ENCODE measurements at regions of chr2 and their contacts with region 1.

Region 1: GRCh38 chr2:37585982-37586621 is 85.3 kb downstream of the CDC42EP3 start:
- DNase-seq: peak; percentile 79
- H3K4me3 Mint-ChIP-seq: peak overlapping the region; percentile 15
- H3K27ac Mint-ChIP-seq: peak overlapping the region; percentile 99
- H3K4me1 Mint-ChIP-seq: peaks cover 90% of the 10 kb centered on the region
- H3K27me3 Mint-ChIP-seq: no peaks in the 10 kb centered on the region

Region 2: DNA sequence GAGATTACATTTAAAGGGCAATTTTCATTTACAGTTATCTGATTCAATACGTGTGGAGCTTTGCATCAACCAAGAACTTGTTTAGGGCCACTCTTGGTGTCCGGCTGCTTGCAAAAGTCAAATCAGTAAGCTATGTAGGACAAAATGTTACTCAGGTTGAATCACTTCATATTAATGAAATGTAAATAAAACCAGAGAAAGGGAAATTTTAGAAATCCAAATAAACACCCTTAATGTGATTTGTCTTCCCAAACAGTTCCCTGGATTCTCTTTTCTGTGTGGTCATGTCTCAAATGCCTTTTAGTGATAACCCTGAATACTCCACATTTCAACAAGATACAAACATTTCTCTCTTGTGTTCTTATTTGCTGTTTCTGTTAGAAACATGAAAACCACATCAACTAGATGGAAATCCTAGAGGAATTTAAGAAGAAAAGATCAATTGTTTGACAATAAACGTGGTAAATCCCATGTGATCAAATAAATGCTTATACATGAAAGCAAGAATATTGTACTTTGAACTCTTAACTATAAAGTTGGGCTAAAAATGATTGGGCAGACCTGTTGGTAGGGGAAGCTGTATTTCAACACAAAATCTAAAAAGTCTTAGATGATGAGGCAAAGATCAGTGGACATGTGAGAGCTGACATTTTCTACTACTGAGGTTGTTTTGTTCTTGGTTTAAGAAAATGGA is 16.0 kb before region 1 on chr2:
- CTCF ChIA-PET with region 1: interaction called, 7 read pairs
- POLR2A ChIA-PET with region 1: interaction called, 19 read pairs
- DNase-seq: no peak
- H3K4me3 Mint-ChIP-seq: no peak overlapping the region
- H3K27ac Mint-ChIP-seq: no peak overlapping the region
- H3K4me1 Mint-ChIP-seq: peaks cover 26% of the 10 kb centered on the region
- H3K27me3 Mint-ChIP-seq: peaks cover 10% of the 10 kb centered on the region

Region 3: GRCh38 chr2:37600735-37601134 is 14.6 kb after region 1 on chr2:
- CTCF ChIA-PET with region 1: interaction called, 21 read pairs
- POLR2A ChIA-PET with region 1: interaction called, 95 read pairs
- DNase-seq: no peak
- H3K4me3 Mint-ChIP-seq: peak overlapping the region; percentile 85
- H3K27ac Mint-ChIP-seq: peak overlapping the region; percentile 89
- H3K4me1 Mint-ChIP-seq: peaks cover 68% of the 10 kb centered on the region
- H3K27me3 Mint-ChIP-seq: peaks cover 5% of the 10 kb centered on the region

Region 4: GRCh38 chr2:37615804-37616676 is 29.9 kb after region 1 on chr2:
- CTCF ChIA-PET with region 1: interaction called, 4 read pairs
- POLR2A ChIA-PET with region 1: interaction called, 95 read pairs
- DNase-seq: peak; percentile 88
- H3K4me3 Mint-ChIP-seq: no peak overlapping the region
- H3K27ac Mint-ChIP-seq: peak overlapping the region; percentile 92
- H3K4me1 Mint-ChIP-seq: peaks cover 50% of the 10 kb centered on the region
- H3K27me3 Mint-ChIP-seq: no peaks in the 10 kb centered on the region

Region 5: GRCh38 chr2:37623971-37624900 is 38.1 kb after region 1 on chr2:
- CTCF ChIA-PET with region 1: interaction called, 5 read pairs
- POLR2A ChIA-PET with region 1: interaction called, 95 read pairs
- DNase-seq: peak; percentile 33
- H3K4me3 Mint-ChIP-seq: peak overlapping the region; percentile 28
- H3K27ac Mint-ChIP-seq: peak overlapping the region; percentile 91
- H3K4me1 Mint-ChIP-seq: peaks cover 53% of the 10 kb centered on the region
- H3K27me3 Mint-ChIP-seq: no peaks in the 10 kb centered on the region

Region 6: GRCh38 chr2:37648331-37649011 is 62.4 kb after region 1 on chr2:
- CTCF ChIA-PET with region 1: interaction called, 7 read pairs
- POLR2A ChIA-PET with region 1: interaction called, 29 read pairs
- DNase-seq: peak; percentile 66
- H3K4me3 Mint-ChIP-seq: peak overlapping the region; percentile 12
- H3K27ac Mint-ChIP-seq: peak overlapping the region; percentile 91
- H3K4me1 Mint-ChIP-seq: peaks cover 92% of the 10 kb centered on the region
- H3K27me3 Mint-ChIP-seq: no peaks in the 10 kb centered on the region